Activated CD4-positive, alpha-beta T cell treated with anti-CD3 and anti-CD28 coated beads for 36 hours (primary cell): ENCODE measurements at regions of chr9 and their contacts with region 1.

Region 1: DNA sequence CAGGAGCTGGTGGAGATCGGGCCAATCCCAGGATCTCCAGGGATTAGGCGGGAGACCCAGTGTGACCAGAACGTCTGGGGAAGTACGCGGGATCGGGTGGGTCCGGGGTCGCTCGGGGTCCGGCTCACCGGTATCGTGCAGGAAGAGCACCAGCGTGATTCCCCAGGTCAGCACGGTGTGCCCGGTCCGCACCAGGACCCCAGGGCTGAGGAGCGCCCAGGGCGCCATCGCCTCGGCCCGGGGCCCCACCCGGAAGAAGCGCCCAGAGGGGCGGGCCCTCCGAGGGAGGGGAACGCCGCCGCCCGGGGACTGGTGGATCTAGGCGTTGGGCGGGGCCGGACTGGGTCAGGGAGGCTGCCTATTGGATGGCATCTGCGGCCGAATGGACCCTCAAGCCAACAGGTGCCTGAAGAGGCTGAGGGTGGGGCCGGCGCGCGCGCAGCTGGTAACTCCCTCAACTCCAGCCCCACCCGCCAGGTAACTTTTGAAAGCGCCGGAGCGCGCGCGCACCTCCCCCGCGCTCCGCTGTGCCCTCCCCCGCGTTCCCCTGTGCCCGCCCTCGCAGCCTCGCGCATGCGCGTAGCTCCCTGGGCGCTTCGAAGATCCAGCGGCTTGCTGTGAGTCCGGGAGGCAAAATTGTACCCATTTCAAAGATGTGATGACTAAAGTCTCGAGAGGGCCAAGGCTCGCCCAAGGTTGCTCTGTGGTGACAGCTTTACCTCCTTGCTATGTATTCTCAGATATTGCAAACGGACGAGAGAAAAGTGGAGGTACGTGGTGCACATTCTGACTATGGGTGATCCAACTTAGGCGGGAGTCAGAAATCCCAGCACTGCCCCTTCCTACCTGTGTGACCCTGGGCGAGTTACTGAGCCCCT is at the start of gene ZDHHC12:
- DNase-seq: peak; percentile 100
- ATAC-seq: peak; percentile 98
- H3K4me3 Mint-ChIP-seq: peak within 1 kb of the TSS; percentile 95
- H3K27ac Mint-ChIP-seq: peak within 1 kb of the TSS; percentile 94
- H3K4me1 Mint-ChIP-seq: peaks cover 25% of the 10 kb centered on the region
- H3K27me3 Mint-ChIP-seq: no peaks in the 10 kb centered on the region
- total RNA-seq, gene ZDHHC12: 45.3 to 49.5 TPM

Region 2: DNA sequence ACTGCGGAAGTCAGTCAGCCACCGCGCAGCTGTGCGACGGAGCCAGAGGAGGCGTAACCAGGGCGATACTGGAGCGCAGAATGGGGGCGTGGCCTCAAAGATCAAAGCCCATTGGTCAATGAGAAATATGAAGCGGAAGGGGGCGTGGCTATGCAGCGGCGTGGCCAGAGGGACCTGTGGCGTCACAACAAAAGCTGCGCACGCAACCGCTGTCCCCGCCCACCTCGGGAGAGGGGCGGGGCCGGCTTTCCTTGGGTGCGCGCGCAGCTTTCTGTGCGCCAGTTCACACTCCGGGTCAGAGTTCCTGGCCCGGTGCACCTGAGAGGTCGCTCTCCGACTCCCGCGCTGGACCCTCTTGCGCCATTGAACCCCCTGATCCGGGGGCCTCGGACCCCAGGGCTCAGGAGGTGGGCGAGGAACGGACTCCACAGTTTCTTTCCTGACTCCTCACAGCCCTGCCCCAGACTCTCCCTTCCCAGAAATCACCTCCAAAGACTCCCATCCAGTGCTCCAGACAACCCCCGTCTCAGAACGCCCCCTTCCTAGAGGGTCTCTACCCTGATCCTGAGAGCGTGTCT is 448.0 kb before region 1 on chr9 and contains the starts of genes GOLGA2 and SWI5:
- CTCF ChIA-PET with region 1: no interaction called
- POLR2A ChIA-PET with region 1: no interaction called
- intact Hi-C with region 1: loop called in 1 of 2 experiments (anchors 10 kb)
- DNase-seq: peak; percentile 100
- ATAC-seq: peak; percentile 99
- H3K4me3 Mint-ChIP-seq: peak within 1 kb of the TSS; percentile 97
- H3K27ac Mint-ChIP-seq: peak within 1 kb of the TSS; percentile 95
- H3K4me1 Mint-ChIP-seq: peaks cover 31% of the 10 kb centered on the region
- H3K27me3 Mint-ChIP-seq: no peaks in the 10 kb centered on the region
- total RNA-seq, gene GOLGA2: 28.4 to 29.4 TPM
- total RNA-seq, gene SWI5: 13.1 to 14.1 TPM

Region 3: DNA sequence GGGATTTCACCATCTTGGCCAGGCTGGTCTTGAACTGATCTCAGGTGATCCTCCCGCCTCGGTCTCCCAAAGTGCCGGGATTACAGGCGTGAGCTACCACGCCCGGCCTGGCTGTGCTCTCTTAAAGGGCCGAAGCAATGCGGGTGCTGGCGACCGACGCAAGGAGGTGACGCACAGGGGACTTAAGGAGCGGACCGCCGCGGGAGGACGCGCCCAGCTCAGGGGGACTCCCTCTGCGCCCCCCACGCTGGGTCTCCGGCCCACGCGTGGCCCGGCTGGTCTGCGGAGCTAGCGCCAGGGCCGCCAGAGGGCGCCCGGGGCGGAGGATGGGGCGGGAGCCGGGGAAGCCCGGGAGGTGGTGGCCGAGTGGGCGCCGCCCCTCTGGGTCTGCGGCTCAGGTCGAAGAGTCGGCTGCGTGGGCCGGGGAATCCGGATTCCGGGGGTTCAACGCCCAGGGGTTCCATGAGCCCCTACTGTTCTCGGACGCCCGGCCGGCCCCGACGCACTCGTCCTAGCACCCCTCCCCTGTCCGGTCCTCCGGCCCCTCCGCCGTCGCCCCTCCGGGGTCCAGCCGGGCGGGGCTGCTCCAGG is 303.9 kb before region 1 on chr9:
- CTCF ChIA-PET with region 1: no interaction called
- POLR2A ChIA-PET with region 1: no interaction called
- intact Hi-C with region 1: loop called in 1 of 2 experiments (anchors 1 kb)
- DNase-seq: peak; percentile 79
- ATAC-seq: peak; percentile 75
- H3K4me3 Mint-ChIP-seq: peak overlapping the region; percentile 59
- H3K27ac Mint-ChIP-seq: no peak overlapping the region
- H3K4me1 Mint-ChIP-seq: peaks cover 10% of the 10 kb centered on the region
- H3K27me3 Mint-ChIP-seq: peaks cover 25% of the 10 kb centered on the region

Region 4: DNA sequence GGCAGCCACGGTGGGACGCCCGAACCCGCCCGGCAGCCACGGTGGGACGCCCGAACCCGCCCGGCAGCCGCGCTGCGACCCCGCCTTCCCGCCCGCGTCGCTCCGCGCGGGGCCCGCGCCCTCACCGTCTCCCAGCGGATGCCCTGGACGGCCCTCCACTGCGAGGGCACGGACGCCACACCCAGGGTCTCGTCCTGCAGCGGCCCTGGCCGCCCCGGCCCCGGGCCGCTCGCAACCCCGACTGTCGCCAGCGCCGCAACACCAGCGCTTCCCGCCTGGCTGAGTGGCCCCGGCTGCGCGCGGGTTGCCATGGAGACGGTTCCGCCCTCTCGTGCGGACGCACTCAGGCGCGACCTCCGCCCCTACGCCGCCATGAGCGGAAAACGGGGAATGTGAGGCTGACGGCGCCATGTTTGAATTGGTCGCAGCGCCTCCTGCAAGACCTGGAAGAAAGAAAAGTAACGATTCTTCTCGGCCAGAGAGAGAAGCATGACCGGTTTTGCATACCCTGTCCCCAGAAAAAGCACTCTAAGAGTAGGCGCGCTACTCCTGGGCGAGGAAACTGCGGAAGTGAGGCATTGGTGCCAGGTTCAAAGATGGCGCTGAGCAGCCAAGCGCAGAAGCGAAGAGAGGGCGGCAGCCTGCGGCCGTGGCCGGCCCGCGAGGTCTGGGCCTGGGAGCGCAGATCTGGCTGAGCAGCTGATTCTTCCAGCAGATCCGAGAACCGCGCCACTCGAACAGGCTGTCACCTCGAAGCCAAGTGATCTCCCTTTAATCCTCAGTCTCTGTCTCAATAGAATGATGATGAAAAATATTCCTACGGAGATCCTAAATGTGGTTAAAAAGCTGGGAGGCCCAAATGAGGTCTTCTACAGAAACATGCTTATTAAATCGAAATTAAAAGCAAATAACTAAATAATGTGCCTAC is 67.4 kb before region 1 on chr9 and contains the start of gene DYNC2I2:
- CTCF ChIA-PET with region 1: no interaction called
- POLR2A ChIA-PET with region 1: no interaction called
- intact Hi-C with region 1: loop called (anchors 1 kb)
- DNase-seq: peak; percentile 99
- ATAC-seq: peak; percentile 98
- H3K4me3 Mint-ChIP-seq: peak within 1 kb of the TSS; percentile 82
- H3K27ac Mint-ChIP-seq: peak within 1 kb of the TSS; percentile 100
- H3K4me1 Mint-ChIP-seq: peaks cover 6% of the 10 kb centered on the region
- H3K27me3 Mint-ChIP-seq: no peaks in the 10 kb centered on the region
- total RNA-seq, gene DYNC2I2: 26.7 to 35.7 TPM

Region 5: GRCh38 chr9:128786681-128787601 is 62.8 kb after region 1 on chr9 and contains the start of gene TBC1D13:
- CTCF ChIA-PET with region 1: no interaction called
- POLR2A ChIA-PET with region 1: no interaction called
- intact Hi-C with region 1: loop called in 1 of 2 experiments (anchors 1 kb)
- DNase-seq: peak; percentile 94
- ATAC-seq: peak; percentile 97
- H3K4me3 Mint-ChIP-seq: peak within 1 kb of the TSS; percentile 87
- H3K27ac Mint-ChIP-seq: peak within 1 kb of the TSS; percentile 87
- H3K4me1 Mint-ChIP-seq: peaks cover 18% of the 10 kb centered on the region
- H3K27me3 Mint-ChIP-seq: no peaks in the 10 kb centered on the region
- total RNA-seq, gene TBC1D13: 10.5 to 14.0 TPM

Region 6: GRCh38 chr9:129028192-129028957 is 304.3 kb after region 1 on chr9 and contains the start of gene SH3GLB2:
- CTCF ChIA-PET with region 1: no interaction called
- POLR2A ChIA-PET with region 1: no interaction called
- intact Hi-C with region 1: loop called in 1 of 2 experiments (anchors 1 kb)
- DNase-seq: peak; percentile 98
- ATAC-seq: peak; percentile 93
- H3K4me3 Mint-ChIP-seq: peak within 1 kb of the TSS; percentile 81
- H3K27ac Mint-ChIP-seq: peak within 1 kb of the TSS; percentile 52
- H3K4me1 Mint-ChIP-seq: peaks cover 17% of the 10 kb centered on the region
- H3K27me3 Mint-ChIP-seq: no peaks in the 10 kb centered on the region
- total RNA-seq, gene SH3GLB2: 49.1 to 53.7 TPM